ENCODE measurements at regions of chr11 and their contacts with region 1.

Region 1: DNA sequence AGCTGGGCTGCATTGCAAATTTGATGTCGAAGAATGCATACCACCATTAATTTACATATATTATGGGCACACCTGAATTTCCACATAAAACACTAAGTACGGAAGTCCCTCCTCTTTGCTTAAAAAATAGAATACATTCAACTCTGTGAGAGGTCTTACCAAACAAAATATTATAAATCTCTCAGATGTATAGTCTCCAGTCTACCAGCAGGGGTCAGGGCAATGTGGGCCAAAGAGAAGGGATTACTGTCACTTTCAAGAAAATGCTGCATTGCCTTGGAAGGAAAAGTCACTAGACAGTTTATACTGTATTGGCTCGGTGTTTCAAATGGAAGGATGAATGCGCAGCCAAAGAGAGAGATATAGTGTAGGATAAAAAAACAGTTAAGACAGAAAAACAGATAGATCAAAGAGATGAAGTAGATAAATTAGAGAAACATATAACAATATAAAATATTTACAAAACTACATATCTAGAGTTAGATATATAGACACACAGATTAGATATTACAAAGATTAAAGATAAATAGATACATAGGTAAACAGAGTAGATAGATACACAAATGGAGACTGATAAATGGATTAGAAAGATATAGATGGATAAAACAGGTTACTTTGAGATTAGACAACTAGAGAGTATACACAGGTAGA is 20.9 kb downstream of the SERGEF start:
- DNase-seq: no peak
- ATAC-seq: peak; percentile 95
- H3K4me3 ChIP-seq: no peak overlapping the region
- H3K27ac ChIP-seq: no peak overlapping the region
- H3K4me1 ChIP-seq: no peaks in the 10 kb centered on the region
- H3K27me3 ChIP-seq: no peaks in the 10 kb centered on the region
- CTCF ChIP-seq: peak; percentile 76 to 83 (median 80)
- EP300 ChIP-seq: no peak
- POLR2A ChIP-seq: no peak
- RAD21 ChIP-seq: peak; percentile 83

Region 2: GRCh38 chr11:18012863-18013781 is 21.2 kb after region 1 on chr11 and contains the start of gene SERGEF:
- CTCF ChIA-PET with region 1: interaction called, 20 read pairs
- POLR2A ChIA-PET with region 1: no interaction called
- RAD21 ChIA-PET with region 1: interaction called, 3 read pairs
- SMC1A ChIA-PET with region 1: interaction called, 5 read pairs
- in situ Hi-C with region 1: no loop called
- intact Hi-C with region 1: no loop called
- DNase-seq: peak; percentile 75
- ATAC-seq: peak; percentile 94
- H3K4me3 ChIP-seq: peak within 1 kb of the TSS; percentile 88
- H3K27ac ChIP-seq: peak within 1 kb of the TSS; percentile 78
- H3K4me1 ChIP-seq: peaks cover 23% of the 10 kb centered on the region
- H3K27me3 ChIP-seq: no peaks in the 10 kb centered on the region
- CTCF ChIP-seq: 0 out of 6 replicates have a peak, but pooled peaks of 2 of the 3 experiments have one; percentile 0 to 2
- EP300 ChIP-seq: no peak
- POLR2A ChIP-seq: peak; percentile 86
- RAD21 ChIP-seq: no peak
- polyA plus RNA-seq, gene SERGEF: 14.6 to 25.6 TPM

Region 3: DNA sequence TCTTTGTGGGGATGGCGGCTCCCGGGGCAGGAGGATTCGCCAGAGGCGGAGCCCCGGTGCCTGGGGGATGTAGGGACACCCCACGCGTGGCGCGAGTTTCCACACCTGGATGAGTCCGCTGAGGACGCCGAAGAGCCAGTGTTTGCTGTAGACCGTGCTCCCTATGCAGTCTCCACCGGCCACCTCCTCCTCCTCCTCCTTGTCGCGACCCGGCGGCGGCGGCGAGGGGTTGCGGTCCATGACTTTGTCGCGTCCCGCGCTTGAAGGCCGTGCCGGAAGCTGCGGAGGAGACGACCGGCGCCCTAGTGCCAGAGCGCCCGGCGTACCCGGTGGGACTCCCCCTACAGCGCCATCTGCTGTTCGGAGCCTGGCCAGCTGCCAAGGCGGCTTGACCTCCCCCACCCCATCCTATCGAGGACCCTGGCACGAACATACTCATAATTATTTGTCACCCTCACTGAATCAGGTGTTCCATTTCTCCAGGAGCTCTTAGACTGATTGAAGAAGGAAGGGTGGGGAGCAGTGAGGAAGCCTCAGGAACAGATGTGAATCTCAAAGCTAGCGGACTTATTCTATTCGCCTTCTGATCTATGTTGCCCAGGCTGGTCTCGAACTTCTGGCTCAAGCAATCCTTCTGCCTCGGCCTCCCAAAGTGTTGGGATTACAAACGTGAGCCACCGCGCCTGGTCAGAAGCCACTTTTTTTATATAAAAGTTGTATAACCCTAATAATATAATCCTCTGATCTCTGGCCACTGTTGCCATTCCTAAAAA is 114.1 kb after region 1 on chr11 and contains the start of gene SAAL1:
- CTCF ChIA-PET with region 1: interaction called, 44 read pairs
- POLR2A ChIA-PET with region 1: no interaction called
- RAD21 ChIA-PET with region 1: interaction called, 12 read pairs
- SMC1A ChIA-PET with region 1: interaction called, 13 read pairs
- in situ Hi-C with region 1: no loop called
- intact Hi-C with region 1: loop called (anchors 1 kb)
- DNase-seq: peak; percentile 35
- ATAC-seq: peak; percentile 97
- H3K4me3 ChIP-seq: peak within 1 kb of the TSS; percentile 92
- H3K27ac ChIP-seq: peak within 1 kb of the TSS; percentile 68
- H3K4me1 ChIP-seq: peaks cover 4% of the 10 kb centered on the region; the same call in 1 of the 2 replicates
- H3K27me3 ChIP-seq: no peaks in the 10 kb centered on the region
- CTCF ChIP-seq: peak; percentile 83 to 85 (median 84)
- EP300 ChIP-seq: no peak
- POLR2A ChIP-seq: peak; percentile 92
- RAD21 ChIP-seq: peak; percentile 47; the same call in 1 of the 2 replicates
- polyA plus RNA-seq, gene SAAL1: 35.1 to 49.5 TPM

Region 4: GRCh38 chr11:18203723-18204122 is 211.8 kb after region 1 on chr11:
- CTCF ChIA-PET with region 1: interaction called, 14 read pairs
- POLR2A ChIA-PET with region 1: no interaction called
- RAD21 ChIA-PET with region 1: interaction called, 7 read pairs
- SMC1A ChIA-PET with region 1: interaction called, 7 read pairs
- in situ Hi-C with region 1: no loop called
- intact Hi-C with region 1: loop called (anchors 5 kb)
- DNase-seq: no peak
- ATAC-seq: peak; percentile 87
- H3K4me3 ChIP-seq: no peak overlapping the region
- H3K27ac ChIP-seq: no peak overlapping the region
- H3K4me1 ChIP-seq: no peaks in the 10 kb centered on the region
- H3K27me3 ChIP-seq: no peaks in the 10 kb centered on the region; a peak in 1 of 4 replicates
- CTCF ChIP-seq: peak; percentile 55 to 62 (median 56)
- EP300 ChIP-seq: no peak
- POLR2A ChIP-seq: no peak
- RAD21 ChIP-seq: peak; percentile 54

Measured in GM12878 (cell line).